Left ventricle myocardium superior (tissue), 1 donor: ENCODE measurements at regions of chrX and their contacts with region 1.

Region 1: GRCh38 chrX:72126539-72127140 is 5.1 kb downstream of the RTL5 start:
- DNase-seq: peak; percentile 85
- ATAC-seq: peak; percentile 87

Region 2: DNA sequence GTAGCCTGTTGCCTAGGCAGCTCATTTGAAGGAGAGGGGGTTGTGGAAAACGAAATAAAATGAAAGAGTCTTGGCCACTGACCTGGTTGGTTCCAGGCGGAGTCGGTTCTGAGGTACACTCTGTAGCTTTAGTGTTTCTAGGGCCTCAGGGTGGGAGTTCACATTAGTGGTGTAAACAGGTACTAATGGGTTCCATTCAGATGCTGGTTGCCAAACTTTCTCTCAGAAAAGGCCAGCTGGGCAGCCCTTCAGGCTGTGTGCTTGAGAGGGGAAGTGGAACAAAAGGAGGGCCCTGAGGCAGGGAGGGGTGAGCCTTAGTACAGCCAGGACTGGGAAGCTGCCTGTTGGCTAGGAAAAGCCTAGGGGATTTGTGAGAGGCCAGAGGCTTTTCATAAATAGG is 191.2 kb before region 1 on chrX:
- intact Hi-C with region 1: no loop called
- DNase-seq: peak; percentile 36
- ATAC-seq: peak; percentile 82

Region 3: GRCh38 chrX:72021975-72022374 is 104.7 kb before region 1 on chrX:
- intact Hi-C with region 1: loop called (anchors 10 kb)
- DNase-seq: no peak
- ATAC-seq: no peak